Activated CD4-positive, alpha-beta memory T cell treated with anti-CD3 and anti-CD28 coated beads, Interleukin-2, amount 10 ng/mL, durations not matched to agents 7 days and 5 days (primary cell): ENCODE measurements at regions of chr1 and their contacts with region 1.

Region 1: DNA sequence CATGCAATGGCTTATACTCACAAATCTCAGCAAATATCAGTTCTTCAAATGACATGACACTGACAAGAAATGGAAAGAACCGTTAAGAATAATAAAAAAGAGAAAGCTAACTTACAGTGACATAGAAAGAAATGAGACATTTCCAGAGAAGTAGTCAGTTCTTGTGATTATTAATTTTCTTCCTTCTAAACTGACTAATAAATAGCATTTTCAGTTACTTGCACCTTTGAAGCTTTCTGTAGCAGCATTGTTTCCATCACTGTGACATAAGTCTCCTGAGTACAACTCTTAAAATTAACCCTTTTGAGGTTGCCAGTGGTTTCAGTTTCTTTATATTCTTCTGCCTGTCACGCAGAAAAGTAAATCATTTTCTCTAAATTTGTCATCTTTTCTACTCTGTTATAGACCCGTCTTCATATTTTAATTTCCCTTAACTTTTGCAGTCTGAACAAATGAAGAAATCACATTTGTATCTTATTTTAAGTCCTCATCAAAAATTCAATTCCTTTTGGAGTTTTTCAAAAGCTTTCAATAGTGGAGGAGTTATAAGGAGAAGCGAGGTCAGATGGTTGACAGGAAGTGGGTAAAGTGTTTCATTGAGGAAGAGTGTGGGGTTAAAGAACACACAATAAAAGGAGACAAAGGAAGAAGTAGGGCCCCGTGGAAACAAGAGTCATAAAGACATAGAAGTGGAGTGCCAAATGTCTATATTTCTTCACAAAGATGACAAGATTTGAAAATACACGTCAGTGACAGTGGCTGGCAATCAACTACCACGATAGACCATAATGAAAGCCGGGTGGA is 57.9 kb upstream of the S1PR1 start:
- DNase-seq: no peak
- H3K4me3 Mint-ChIP-seq: peak overlapping the region; percentile 69
- H3K27ac Mint-ChIP-seq: peak overlapping the region; percentile 97
- H3K4me1 Mint-ChIP-seq: peaks cover 69% of the 10 kb centered on the region
- H3K27me3 Mint-ChIP-seq: no peaks in the 10 kb centered on the region

Region 2: GRCh38 chr1:101081496-101082488 is 97.1 kb before region 1 on chr1:
- CTCF ChIA-PET with region 1: no interaction called
- POLR2A ChIA-PET with region 1: interaction called, 18 read pairs
- DNase-seq: peak; percentile 71
- H3K4me3 Mint-ChIP-seq: peak overlapping the region; percentile 33
- H3K27ac Mint-ChIP-seq: peak overlapping the region; percentile 96
- H3K4me1 Mint-ChIP-seq: peaks cover 50% of the 10 kb centered on the region
- H3K27me3 Mint-ChIP-seq: no peaks in the 10 kb centered on the region

Region 3: GRCh38 chr1:101128211-101128727 is 50.6 kb before region 1 on chr1:
- CTCF ChIA-PET with region 1: interaction called, 3 read pairs
- POLR2A ChIA-PET with region 1: interaction called, 19 read pairs
- DNase-seq: peak; percentile 18
- H3K4me3 Mint-ChIP-seq: peak overlapping the region; percentile 52
- H3K27ac Mint-ChIP-seq: peak overlapping the region; percentile 79
- H3K4me1 Mint-ChIP-seq: peaks cover 65% of the 10 kb centered on the region
- H3K27me3 Mint-ChIP-seq: peaks cover 4% of the 10 kb centered on the region

Region 4: GRCh38 chr1:101167891-101168290 is 11.0 kb before region 1 on chr1:
- CTCF ChIA-PET with region 1: interaction called, 3 read pairs
- POLR2A ChIA-PET with region 1: interaction called, 10 read pairs
- DNase-seq: no peak
- H3K4me3 Mint-ChIP-seq: no peak overlapping the region
- H3K27ac Mint-ChIP-seq: no peak overlapping the region
- H3K4me1 Mint-ChIP-seq: peaks cover 30% of the 10 kb centered on the region
- H3K27me3 Mint-ChIP-seq: no peaks in the 10 kb centered on the region

Region 5: GRCh38 chr1:101198842-101199636 is 20.1 kb after region 1 on chr1:
- CTCF ChIA-PET with region 1: no interaction called
- POLR2A ChIA-PET with region 1: interaction called, 35 read pairs
- DNase-seq: peak; percentile 70
- H3K4me3 Mint-ChIP-seq: peak overlapping the region; percentile 6
- H3K27ac Mint-ChIP-seq: peak overlapping the region; percentile 84
- H3K4me1 Mint-ChIP-seq: peaks cover 30% of the 10 kb centered on the region
- H3K27me3 Mint-ChIP-seq: no peaks in the 10 kb centered on the region